ENCODE measurements at regions of chr15 and their contacts with region 1.

Region 1: DNA sequence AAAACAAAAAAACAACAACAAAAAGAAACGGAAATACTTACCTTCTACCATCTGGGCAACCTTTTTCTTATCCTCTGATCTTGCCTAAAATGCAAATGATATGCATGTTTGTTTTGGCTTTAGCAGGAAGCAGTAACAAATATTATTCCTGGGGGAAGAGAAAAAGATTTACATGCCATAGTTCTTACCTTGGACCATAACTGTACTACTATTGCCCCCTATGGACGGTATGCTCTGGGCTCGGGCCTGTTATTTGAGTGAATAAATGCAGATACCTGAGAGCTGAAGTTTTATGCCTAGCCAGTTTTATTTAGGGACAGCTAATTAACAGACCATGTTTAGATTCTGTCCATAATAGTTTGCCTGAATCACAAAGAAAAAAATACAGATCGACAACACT is 12.6 kb upstream of the STARD5 start:
- DNase-seq: peak; percentile 55
- ATAC-seq: peak; percentile 55
- H3K4me3 Mint-ChIP-seq: no peak overlapping the region
- H3K27ac Mint-ChIP-seq: no peak overlapping the region
- H3K4me1 Mint-ChIP-seq: peaks cover 17% of the 10 kb centered on the region
- H3K27me3 Mint-ChIP-seq: no peaks in the 10 kb centered on the region

Region 2: DNA sequence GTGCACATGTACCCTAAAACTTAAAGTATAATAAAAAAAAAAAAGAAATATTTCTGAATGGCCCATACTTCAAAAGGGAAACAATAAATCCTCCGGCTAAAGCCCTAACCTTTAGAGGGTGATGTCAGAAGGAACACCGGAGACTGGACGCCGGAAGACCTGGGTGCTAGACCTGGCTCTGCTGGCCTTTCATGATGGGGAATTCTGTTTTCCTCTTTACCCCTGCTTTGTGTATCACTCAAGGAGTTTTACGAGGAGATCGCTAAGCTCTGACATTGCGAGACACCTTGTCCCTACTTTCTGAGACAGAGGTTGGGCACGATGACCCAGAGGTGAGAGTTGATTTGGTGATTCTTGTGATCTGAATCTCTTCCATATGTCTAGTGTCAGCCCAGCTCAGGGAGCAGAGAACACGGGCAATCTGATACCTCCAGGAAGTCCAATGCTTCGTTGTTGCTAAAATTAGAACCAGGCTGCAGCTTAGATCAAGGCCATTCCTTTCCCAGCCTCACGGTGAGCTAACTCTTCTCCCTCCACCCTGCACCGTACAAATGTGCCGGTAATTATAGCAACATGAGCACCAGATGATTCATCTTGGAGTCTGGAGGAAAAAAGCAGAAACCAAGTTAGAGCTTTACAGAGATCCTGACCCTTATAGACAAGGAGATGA is 244.5 kb before region 1 on chr15:
- CTCF ChIA-PET with region 1: no interaction called
- DNase-seq: no peak
- ATAC-seq: no peak
- H3K4me3 Mint-ChIP-seq: no peak overlapping the region
- H3K27ac Mint-ChIP-seq: no peak overlapping the region
- H3K4me1 Mint-ChIP-seq: peaks cover 3% of the 10 kb centered on the region
- H3K27me3 Mint-ChIP-seq: peaks cover 63% of the 10 kb centered on the region

Region 3: GRCh38 chr15:81308260-81308659 is 28.3 kb before region 1 on chr15:
- CTCF ChIA-PET with region 1: no interaction called
- DNase-seq: no peak
- ATAC-seq: no peak
- H3K4me3 Mint-ChIP-seq: no peak overlapping the region
- H3K27ac Mint-ChIP-seq: no peak overlapping the region
- H3K4me1 Mint-ChIP-seq: peaks cover 31% of the 10 kb centered on the region
- H3K27me3 Mint-ChIP-seq: no peaks in the 10 kb centered on the region

Region 4: DNA sequence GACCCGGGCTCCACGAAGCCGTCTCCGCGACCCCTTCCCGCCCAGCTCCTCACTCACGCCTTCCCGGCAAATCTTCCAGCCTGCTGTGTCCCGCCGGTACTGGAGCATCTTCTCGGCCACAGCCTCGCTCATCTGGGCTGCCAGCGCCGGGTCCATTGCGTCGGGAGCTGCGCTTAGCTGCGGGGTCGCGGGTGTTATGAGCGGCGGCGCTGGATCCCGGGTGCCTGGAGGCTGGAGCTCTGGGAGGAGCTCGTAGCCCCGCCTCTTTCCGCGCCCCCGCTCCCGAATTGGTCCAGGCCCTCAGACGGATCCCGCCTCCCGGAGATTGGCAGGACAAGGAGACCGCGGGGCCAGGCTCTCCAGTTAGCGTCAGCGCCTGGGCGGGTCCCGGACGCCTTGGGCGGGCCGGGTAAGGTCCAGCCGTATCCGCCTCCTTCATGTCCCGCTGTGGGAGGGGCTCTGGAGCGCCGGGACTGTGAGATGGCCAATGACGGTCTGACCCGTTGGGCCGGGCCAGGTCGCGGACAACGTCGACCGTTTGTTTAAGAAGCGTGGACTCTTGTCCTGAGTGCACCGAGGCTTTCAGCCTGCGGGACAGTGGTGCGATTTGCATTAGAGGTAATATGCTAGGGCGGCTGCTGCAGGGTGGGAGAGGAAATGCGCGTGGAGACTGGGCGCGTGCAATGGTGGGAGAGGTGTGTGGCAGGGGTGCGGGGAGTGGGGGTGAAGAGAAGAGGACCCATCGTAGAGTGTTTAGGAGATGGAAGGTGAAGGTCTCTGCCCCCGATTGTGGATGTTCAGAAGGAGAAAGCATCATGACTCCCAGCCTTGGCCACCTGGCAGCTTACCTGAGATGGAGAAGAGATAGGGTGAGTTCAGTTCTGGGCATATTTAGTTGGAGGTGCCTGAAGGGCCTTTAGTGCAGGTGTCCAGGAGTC is 12.4 kb before region 1 on chr15 and contains the start of gene STARD5:
- CTCF ChIA-PET with region 1: interaction called, 11 read pairs
- DNase-seq: peak; percentile 98
- ATAC-seq: peak; percentile 100
- H3K4me3 Mint-ChIP-seq: peak within 1 kb of the TSS; percentile 85
- H3K27ac Mint-ChIP-seq: peak within 1 kb of the TSS; percentile 78
- H3K4me1 Mint-ChIP-seq: peaks cover 29% of the 10 kb centered on the region
- H3K27me3 Mint-ChIP-seq: no peaks in the 10 kb centered on the region
- total RNA-seq, gene STARD5: 4.8 to 5.2 TPM

Measured in activated CD8-positive, alpha-beta memory T cell treated with anti-CD3 and anti-CD28 coated beads, Interleukin-2, amount 10 ng/mL, durations not matched to agents 7 days and 5 days (primary cell).